Ascending aorta (tissue), 2 donors: ENCODE measurements at regions of chr6 and their contacts with region 1.

Region 1: GRCh38 chr6:156457601-156458000 is 319.6 kb upstream of the ARID1B start:
- DNase-seq: no peak
- H3K4me3 ChIP-seq: no peak overlapping the region
- H3K27ac ChIP-seq: no peak overlapping the region
- H3K4me1 ChIP-seq: no peaks in the 10 kb centered on the region
- H3K27me3 ChIP-seq: no peaks in the 10 kb centered on the region
- CTCF ChIP-seq: no peak

Region 2: GRCh38 chr6:156402227-156402626 is 55.4 kb before region 1 on chr6:
- intact Hi-C with region 1: loop called (anchors 5 kb)
- DNase-seq: no peak
- H3K4me3 ChIP-seq: no peak overlapping the region
- H3K27ac ChIP-seq: no peak overlapping the region
- H3K4me1 ChIP-seq: no peaks in the 10 kb centered on the region
- H3K27me3 ChIP-seq: no peaks in the 10 kb centered on the region
- CTCF ChIP-seq: no peak